ENCODE measurements at regions of chr21 and their contacts with region 1.

Region 1: DNA sequence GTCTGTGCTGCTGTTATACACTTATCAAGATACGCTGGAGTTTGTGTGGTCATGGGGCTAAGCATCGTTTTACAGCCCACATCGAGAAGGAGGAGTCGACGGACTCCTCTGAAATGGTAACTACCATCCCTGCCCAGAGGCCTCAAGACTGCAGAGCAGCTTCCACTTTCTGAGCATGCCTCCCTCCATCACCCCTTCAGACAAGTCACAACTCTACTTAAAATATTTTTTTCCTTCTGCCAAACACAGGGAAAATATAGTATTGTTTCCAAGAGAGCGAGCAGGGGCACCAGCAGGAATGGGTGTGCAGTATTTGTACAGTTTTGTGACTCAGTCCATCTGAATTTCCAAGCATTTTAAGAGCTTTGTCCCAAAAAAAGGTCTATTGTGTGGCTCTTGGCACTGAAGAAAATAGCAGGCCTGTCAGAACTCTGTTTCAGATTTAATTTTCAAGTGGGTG is 14.1 kb downstream of the EVA1C start:
- DNase-seq: no peak
- ATAC-seq: no peak
- H3K4me3 ChIP-seq: no peak overlapping the region
- H3K4me3 Mint-ChIP-seq: no peak overlapping the region
- H3K27ac ChIP-seq: no peak overlapping the region
- H3K27ac Mint-ChIP-seq: peak overlapping the region in 1 of 2 donors; percentile 33
- H3K4me1 ChIP-seq: no peaks in the 10 kb centered on the region
- H3K4me1 Mint-ChIP-seq: peaks cover 0 to 8% (median 5%) of the 10 kb centered on the region in 3 donors
- H3K27me3 ChIP-seq: no peaks in the 10 kb centered on the region
- H3K27me3 Mint-ChIP-seq: no peaks in the 10 kb centered on the region

Region 2: GRCh38 chr21:32214654-32215305 is 211.8 kb before region 1 on chr21:
- CTCF ChIA-PET with region 1: interaction called in 1 of 2 experiments, 15 read pairs
- POLR2A ChIA-PET with region 1: no interaction called
- DNase-seq: no peak
- ATAC-seq: no peak
- H3K4me3 ChIP-seq: no peak overlapping the region
- H3K4me3 Mint-ChIP-seq: no peak overlapping the region
- H3K27ac ChIP-seq: no peak overlapping the region
- H3K27ac Mint-ChIP-seq: no peak overlapping the region
- H3K4me1 ChIP-seq: no peaks in the 10 kb centered on the region
- H3K4me1 Mint-ChIP-seq: no peaks in the 10 kb centered on the region
- H3K27me3 ChIP-seq: peaks cover 0 to 27% of the 10 kb centered on the region in 2 experiments
- H3K27me3 Mint-ChIP-seq: peaks cover 16 to 24% of the 10 kb centered on the region in 2 donors

Measured in T-cell (primary cell).